AG04449 (cell line): ENCODE measurements at regions of chr2 and their contacts with region 1.

Region 1: GRCh38 chr2:178306352-178307073 is 112.2 kb downstream of the OSBPL6 start:
- DNase-seq: no peak
- H3K4me3 ChIP-seq: no peak overlapping the region
- CTCF ChIP-seq: peak; percentile 73

Region 2: DNA sequence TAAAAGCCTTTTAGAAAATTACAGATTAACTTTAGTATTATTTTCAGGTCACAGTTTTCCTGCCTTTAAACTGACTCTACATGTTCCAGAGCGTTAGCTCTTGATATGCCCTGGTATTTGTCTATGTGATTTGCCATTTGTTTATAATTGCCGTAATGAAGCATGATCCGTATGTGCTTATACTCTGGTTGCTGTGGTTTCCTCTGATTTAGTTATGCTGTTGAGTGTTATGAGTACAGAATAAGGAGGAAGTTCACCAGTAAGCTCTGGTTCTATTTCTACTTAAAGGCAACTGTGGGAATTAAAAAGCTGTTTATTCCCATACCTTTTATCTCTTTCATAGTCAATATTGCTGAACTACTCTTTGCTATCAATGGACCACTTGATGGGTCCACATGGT is 11.3 kb after region 1 on chr2:
- CTCF ChIA-PET with region 1: interaction called, 20 read pairs
- POLR2A ChIA-PET with region 1: no interaction called
- DNase-seq: no peak
- H3K4me3 ChIP-seq: no peak overlapping the region
- CTCF ChIP-seq: no peak